Activated T-helper 1 cell treated with anti-CD3 and anti-CD28 coated beads, Interleukin-12 subunit alpha, Interleukin-12 subunit beta, Interleukin-2, Interleukin-4 antibody, amounts not matched to agents 30 ng/mL and 10 ng/mL and 1 ng/mL, durations not matched to agents 14 hours and 24 hours and 36 hours (primary cell): ENCODE measurements at regions of chr14 and their contacts with region 1.

Region 1: GRCh38 chr14:49778421-49778820 is 10.5 kb downstream of the KLHDC2 start:
- DNase-seq: no peak
- H3K4me3 Mint-ChIP-seq: no peak overlapping the region
- H3K27ac Mint-ChIP-seq: no peak overlapping the region
- H3K4me1 Mint-ChIP-seq: peaks cover 8% of the 10 kb centered on the region
- H3K27me3 Mint-ChIP-seq: no peaks in the 10 kb centered on the region

Region 2: DNA sequence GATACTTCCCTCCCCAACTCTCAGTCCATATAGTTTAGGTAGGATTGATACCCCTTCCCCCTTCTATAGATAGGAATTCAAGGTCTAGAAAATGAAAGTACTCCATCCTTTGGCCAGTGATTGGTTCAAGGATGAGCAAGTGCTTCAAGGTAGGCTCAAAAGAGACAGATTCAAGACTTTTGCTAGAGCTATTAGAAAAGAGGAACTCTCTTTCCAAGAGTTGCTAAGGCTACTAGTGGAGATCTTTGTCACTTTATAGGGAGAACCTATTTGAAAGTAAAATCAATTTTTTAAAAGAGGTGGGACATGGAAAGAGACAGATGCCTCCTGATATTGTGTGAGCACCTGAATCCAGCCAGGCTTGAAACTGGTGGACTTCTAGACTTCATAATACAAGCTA is 107.9 kb before region 1 on chr14:
- intact Hi-C with region 1: no loop called
- DNase-seq: no peak
- H3K4me3 Mint-ChIP-seq: no peak overlapping the region
- H3K27ac Mint-ChIP-seq: no peak overlapping the region
- H3K4me1 Mint-ChIP-seq: no peaks in the 10 kb centered on the region
- H3K27me3 Mint-ChIP-seq: no peaks in the 10 kb centered on the region

Region 3: GRCh38 chr14:49808780-49809179 is 30.4 kb after region 1 on chr14:
- intact Hi-C with region 1: loop called (anchors 5 kb)
- DNase-seq: no peak
- H3K4me3 Mint-ChIP-seq: no peak overlapping the region
- H3K27ac Mint-ChIP-seq: no peak overlapping the region
- H3K4me1 Mint-ChIP-seq: no peaks in the 10 kb centered on the region
- H3K27me3 Mint-ChIP-seq: no peaks in the 10 kb centered on the region